HEK293 (cell line): ENCODE measurements at regions of chr10 and their contacts with region 1.

Region 1: GRCh38 chr10:99394256-99394655 is 36.2 kb downstream of the GOT1 start:
- H3K4me3 ChIP-seq: no peak overlapping the region
- H3K27ac ChIP-seq: no peak overlapping the region
- H3K4me1 ChIP-seq: peaks cover 19% of the 10 kb centered on the region
- CTCF ChIP-seq: no peak

Region 2: DNA sequence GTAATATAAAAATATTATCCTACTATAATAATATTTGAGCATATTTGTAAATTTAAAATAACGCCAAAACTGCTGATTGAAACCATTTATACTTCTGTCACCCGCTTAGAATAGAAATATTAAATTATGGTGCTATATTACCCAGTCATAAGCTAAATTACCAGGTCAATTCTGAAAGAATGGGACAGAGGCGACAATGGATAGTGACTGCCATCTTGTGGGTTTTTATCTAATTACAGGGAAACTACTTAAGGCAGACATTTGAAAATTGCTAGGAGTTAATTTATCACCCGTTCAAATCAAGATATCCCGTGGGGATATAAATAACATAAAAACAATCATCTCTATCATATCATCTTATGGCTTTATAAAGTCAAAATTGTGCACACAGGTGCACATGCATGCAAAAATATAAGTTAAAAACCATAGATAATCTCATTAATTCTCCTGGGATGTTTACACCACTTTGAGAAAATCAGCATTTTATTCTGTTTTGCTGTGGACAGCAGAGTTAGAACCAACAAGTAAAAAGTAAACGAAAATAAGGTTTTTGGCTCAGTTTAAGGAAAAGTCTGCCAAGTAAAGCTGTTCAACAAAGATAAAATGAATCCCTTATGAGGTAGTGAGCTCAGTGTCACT is 117.3 kb before region 1 on chr10:
- CTCF ChIA-PET with region 1: no interaction called
- POLR2A ChIA-PET with region 1: no interaction called
- H3K4me3 ChIP-seq: no peak overlapping the region
- H3K27ac ChIP-seq: no peak overlapping the region
- H3K4me1 ChIP-seq: peaks cover 8% of the 10 kb centered on the region
- CTCF ChIP-seq: peak; percentile 40; the same call in 1 of the 2 replicates

Region 3: GRCh38 chr10:99341860-99342490 is 52.3 kb before region 1 on chr10:
- CTCF ChIA-PET with region 1: no interaction called
- POLR2A ChIA-PET with region 1: no interaction called
- H3K4me3 ChIP-seq: no peak overlapping the region
- H3K27ac ChIP-seq: no peak overlapping the region
- H3K4me1 ChIP-seq: peaks cover 15% of the 10 kb centered on the region
- CTCF ChIP-seq: no peak

Region 4: GRCh38 chr10:99358101-99358500 is 36.2 kb before region 1 on chr10:
- CTCF ChIA-PET with region 1: no interaction called
- POLR2A ChIA-PET with region 1: no interaction called
- H3K4me3 ChIP-seq: no peak overlapping the region
- H3K27ac ChIP-seq: no peak overlapping the region
- H3K4me1 ChIP-seq: 0 out of 2 replicates have a peak, but pooled peaks cover 2% of the 10 kb centered on the region
- CTCF ChIP-seq: no peak

Region 5: DNA sequence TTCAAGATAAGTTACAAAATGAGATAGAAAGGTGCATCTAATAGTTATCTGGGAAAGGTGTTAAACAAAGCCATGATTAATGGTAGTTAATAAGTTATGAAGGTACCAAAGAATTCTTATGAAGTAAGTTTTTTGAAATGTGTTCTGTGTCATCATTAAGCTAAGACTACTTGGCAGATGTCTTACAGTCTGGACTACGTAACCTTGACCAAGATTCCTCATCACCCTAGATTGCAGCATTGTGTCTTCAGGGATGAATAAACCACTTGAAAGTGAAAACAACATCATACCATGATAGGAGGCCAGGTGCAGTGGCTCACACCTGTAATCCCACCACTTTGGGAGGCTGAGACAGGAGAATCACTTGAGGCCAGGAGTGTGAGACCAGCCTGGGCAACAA is 12.1 kb before region 1 on chr10:
- CTCF ChIA-PET with region 1: interaction called, 10 read pairs
- POLR2A ChIA-PET with region 1: no interaction called
- H3K4me3 ChIP-seq: no peak overlapping the region
- H3K27ac ChIP-seq: no peak overlapping the region
- H3K4me1 ChIP-seq: no peaks in the 10 kb centered on the region
- CTCF ChIP-seq: no peak

Region 6: GRCh38 chr10:99467236-99467999 is 73.2 kb after region 1 on chr10:
- CTCF ChIA-PET with region 1: no interaction called
- POLR2A ChIA-PET with region 1: no interaction called
- H3K4me3 ChIP-seq: no peak overlapping the region
- H3K27ac ChIP-seq: no peak overlapping the region
- H3K4me1 ChIP-seq: no peaks in the 10 kb centered on the region
- CTCF ChIP-seq: no peak